ENCODE measurements at regions of chr12 and their contacts with region 1.

Region 1: DNA sequence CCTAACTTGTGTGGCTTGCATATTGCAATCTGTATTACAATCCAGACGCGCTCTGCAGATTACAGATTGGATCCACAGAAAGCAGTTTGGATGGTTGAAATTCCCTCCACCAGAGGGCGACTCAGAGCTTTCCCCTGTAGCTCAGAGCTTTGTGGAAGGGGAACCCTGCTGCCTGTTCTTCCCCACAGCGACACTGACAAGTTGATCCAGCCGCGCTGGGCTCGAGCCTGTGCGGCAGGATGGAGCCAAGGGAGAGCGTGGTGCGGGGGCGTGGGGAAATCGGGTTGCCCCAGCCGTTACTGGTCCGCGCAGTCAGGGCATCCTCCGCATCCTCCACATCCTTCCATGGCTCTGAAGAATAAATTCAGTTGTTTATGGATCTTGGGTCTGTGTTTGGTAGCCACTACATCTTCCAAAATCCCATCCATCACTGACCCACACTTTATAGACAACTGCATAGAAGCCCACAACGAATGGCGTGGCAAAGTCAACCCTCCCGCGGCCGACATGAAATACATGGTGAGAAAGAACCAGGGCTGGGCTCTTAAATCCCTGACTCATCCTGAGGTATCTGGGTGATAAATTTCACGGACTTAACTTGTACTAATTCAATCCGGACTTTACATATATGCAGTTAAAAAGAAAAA is at the start of gene GLIPR1L1:
- DNase-seq: peak; percentile 69 to 88 (median 84)
- ATAC-seq: peak; percentile 81
- H3K4me3 ChIP-seq: peak within 1 kb of the TSS; percentile 28 to 34
- H3K4me3 Mint-ChIP-seq: peak within 1 kb of the TSS; percentile 62
- H3K27ac ChIP-seq: no peak within 1 kb of the TSS
- H3K27ac Mint-ChIP-seq: no peak within 1 kb of the TSS
- H3K4me1 ChIP-seq: peaks cover 11% of the 10 kb centered on the region
- H3K4me1 Mint-ChIP-seq: peaks cover 15% of the 10 kb centered on the region
- H3K27me3 ChIP-seq: peaks cover 0 to 4% of the 10 kb centered on the region in 2 experiments
- H3K27me3 Mint-ChIP-seq: peaks cover 24% of the 10 kb centered on the region
- CTCF ChIP-seq: peak; percentile 89
- total RNA-seq, gene GLIPR1L1: not detected

Region 2: GRCh38 chr12:74499192-74499591 is 835.3 kb before region 1 on chr12:
- CTCF ChIA-PET with region 1: no interaction called
- POLR2A ChIA-PET with region 1: no interaction called
- intact Hi-C with region 1: no loop called
- DNase-seq: no peak
- ATAC-seq: no peak
- H3K4me3 ChIP-seq: no peak overlapping the region
- H3K4me3 Mint-ChIP-seq: no peak overlapping the region
- H3K27ac ChIP-seq: no peak overlapping the region
- H3K27ac Mint-ChIP-seq: no peak overlapping the region
- H3K4me1 ChIP-seq: no peaks in the 10 kb centered on the region
- H3K4me1 Mint-ChIP-seq: no peaks in the 10 kb centered on the region
- H3K27me3 ChIP-seq: no peaks in the 10 kb centered on the region
- H3K27me3 Mint-ChIP-seq: no peaks in the 10 kb centered on the region
- CTCF ChIP-seq: no peak

Region 3: GRCh38 chr12:75184516-75184915 is 150.0 kb before region 1 on chr12:
- CTCF ChIA-PET with region 1: no interaction called
- POLR2A ChIA-PET with region 1: no interaction called
- intact Hi-C with region 1: no loop called
- DNase-seq: no peak
- ATAC-seq: no peak
- H3K4me3 ChIP-seq: no peak overlapping the region
- H3K4me3 Mint-ChIP-seq: no peak overlapping the region
- H3K27ac ChIP-seq: no peak overlapping the region
- H3K27ac Mint-ChIP-seq: no peak overlapping the region
- H3K4me1 ChIP-seq: no peaks in the 10 kb centered on the region
- H3K4me1 Mint-ChIP-seq: no peaks in the 10 kb centered on the region
- H3K27me3 ChIP-seq: no peaks in the 10 kb centered on the region
- H3K27me3 Mint-ChIP-seq: peaks cover 4% of the 10 kb centered on the region
- CTCF ChIP-seq: no peak

Region 4: GRCh38 chr12:75505706-75506312 is 171.3 kb after region 1 on chr12:
- CTCF ChIA-PET with region 1: interaction called, 10 read pairs
- POLR2A ChIA-PET with region 1: interaction called, 5 read pairs
- intact Hi-C with region 1: loop called (anchors 1 kb)
- DNase-seq: peak in 2 of 9 experiments; percentile 41 to 55
- ATAC-seq: peak; percentile 63
- H3K4me3 ChIP-seq: no peak overlapping the region
- H3K4me3 Mint-ChIP-seq: no peak overlapping the region
- H3K27ac ChIP-seq: no peak overlapping the region
- H3K27ac Mint-ChIP-seq: no peak overlapping the region
- H3K4me1 ChIP-seq: peaks cover 13% of the 10 kb centered on the region
- H3K4me1 Mint-ChIP-seq: peaks cover 26% of the 10 kb centered on the region
- H3K27me3 ChIP-seq: no peaks in the 10 kb centered on the region
- H3K27me3 Mint-ChIP-seq: no peaks in the 10 kb centered on the region
- CTCF ChIP-seq: peak; percentile 84

Region 5: GRCh38 chr12:75603475-75603874 is 269.0 kb after region 1 on chr12:
- CTCF ChIA-PET with region 1: no interaction called
- POLR2A ChIA-PET with region 1: no interaction called
- intact Hi-C with region 1: no loop called
- DNase-seq: no peak
- ATAC-seq: no peak
- H3K4me3 ChIP-seq: no peak overlapping the region
- H3K4me3 Mint-ChIP-seq: no peak overlapping the region
- H3K27ac ChIP-seq: no peak overlapping the region
- H3K27ac Mint-ChIP-seq: no peak overlapping the region
- H3K4me1 ChIP-seq: no peaks in the 10 kb centered on the region
- H3K4me1 Mint-ChIP-seq: no peaks in the 10 kb centered on the region
- H3K27me3 ChIP-seq: no peaks in the 10 kb centered on the region
- H3K27me3 Mint-ChIP-seq: peaks cover 6% of the 10 kb centered on the region
- CTCF ChIP-seq: no peak

Region 6: DNA sequence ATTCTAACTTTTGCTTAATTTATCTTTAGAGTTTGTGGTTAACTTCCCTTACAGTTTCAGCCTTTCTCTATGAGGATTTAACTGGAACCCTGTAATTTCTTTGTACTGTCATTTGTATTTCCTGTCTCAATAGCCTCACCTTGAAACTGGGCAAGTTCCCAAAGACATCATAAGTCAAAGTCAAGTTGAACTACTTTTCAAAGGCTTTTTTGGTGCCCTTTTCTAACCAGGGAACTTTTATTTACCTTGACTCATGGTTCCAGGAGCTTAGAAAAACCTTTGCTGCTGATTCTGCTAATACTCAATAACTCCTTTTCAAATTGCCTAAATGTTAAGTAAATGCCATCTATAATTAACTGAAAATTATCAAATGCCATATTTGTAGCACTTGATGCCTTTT is 377.7 kb after region 1 on chr12:
- CTCF ChIA-PET with region 1: no interaction called
- POLR2A ChIA-PET with region 1: no interaction called
- intact Hi-C with region 1: no loop called
- DNase-seq: no peak
- ATAC-seq: no peak
- H3K4me3 ChIP-seq: no peak overlapping the region
- H3K4me3 Mint-ChIP-seq: no peak overlapping the region
- H3K27ac ChIP-seq: no peak overlapping the region
- H3K27ac Mint-ChIP-seq: no peak overlapping the region
- H3K4me1 ChIP-seq: no peaks in the 10 kb centered on the region
- H3K4me1 Mint-ChIP-seq: no peaks in the 10 kb centered on the region
- H3K27me3 ChIP-seq: no peaks in the 10 kb centered on the region
- H3K27me3 Mint-ChIP-seq: peaks cover 2% of the 10 kb centered on the region
- CTCF ChIP-seq: no peak

Measured in CD8-positive, alpha-beta T cell (primary cell).